ENCODE measurements at regions of chr9 and their contacts with region 1.

Region 1: DNA sequence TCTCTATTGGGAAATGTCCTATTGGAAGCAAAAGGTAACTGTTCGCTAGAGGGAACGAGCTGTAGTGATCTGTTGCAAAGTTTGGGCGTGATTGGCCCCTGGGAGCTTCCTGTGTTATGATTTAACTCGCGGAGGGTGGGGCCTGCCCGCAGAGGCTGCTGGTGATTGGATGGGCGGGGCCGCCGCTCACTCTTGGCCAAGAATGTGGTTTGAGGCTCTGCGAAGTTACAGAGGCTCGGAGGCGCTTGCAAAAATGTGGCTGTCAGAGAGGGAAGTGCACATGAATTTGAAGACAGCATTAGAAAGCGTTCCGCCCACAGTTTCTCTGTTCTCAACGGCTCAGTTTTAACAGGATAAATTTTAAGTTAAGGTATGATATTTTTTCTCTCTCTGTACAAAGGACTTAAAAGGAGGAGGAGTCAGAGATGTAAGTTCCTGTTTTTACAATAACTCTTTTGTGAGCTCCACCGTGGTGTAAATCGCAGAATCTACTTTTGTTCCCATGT is 46.9 kb downstream of the CNTRL start:
- DNase-seq: peak; percentile 98
- H3K4me3 Mint-ChIP-seq: peak overlapping the region; percentile 89
- H3K27ac Mint-ChIP-seq: peak overlapping the region; percentile 80
- H3K4me1 Mint-ChIP-seq: peaks cover 16% of the 10 kb centered on the region
- H3K27me3 Mint-ChIP-seq: no peaks in the 10 kb centered on the region
- CTCF ChIP-seq: no peak

Region 2: GRCh38 chr9:121048618-121049017 is 73.0 kb before region 1 on chr9:
- CTCF ChIA-PET with region 1: no interaction called
- POLR2A ChIA-PET with region 1: no interaction called
- intact Hi-C with region 1: no loop called
- DNase-seq: no peak
- H3K4me3 Mint-ChIP-seq: no peak overlapping the region
- H3K27ac Mint-ChIP-seq: no peak overlapping the region
- H3K4me1 Mint-ChIP-seq: no peaks in the 10 kb centered on the region
- H3K27me3 Mint-ChIP-seq: no peaks in the 10 kb centered on the region
- CTCF ChIP-seq: no peak

Region 3: DNA sequence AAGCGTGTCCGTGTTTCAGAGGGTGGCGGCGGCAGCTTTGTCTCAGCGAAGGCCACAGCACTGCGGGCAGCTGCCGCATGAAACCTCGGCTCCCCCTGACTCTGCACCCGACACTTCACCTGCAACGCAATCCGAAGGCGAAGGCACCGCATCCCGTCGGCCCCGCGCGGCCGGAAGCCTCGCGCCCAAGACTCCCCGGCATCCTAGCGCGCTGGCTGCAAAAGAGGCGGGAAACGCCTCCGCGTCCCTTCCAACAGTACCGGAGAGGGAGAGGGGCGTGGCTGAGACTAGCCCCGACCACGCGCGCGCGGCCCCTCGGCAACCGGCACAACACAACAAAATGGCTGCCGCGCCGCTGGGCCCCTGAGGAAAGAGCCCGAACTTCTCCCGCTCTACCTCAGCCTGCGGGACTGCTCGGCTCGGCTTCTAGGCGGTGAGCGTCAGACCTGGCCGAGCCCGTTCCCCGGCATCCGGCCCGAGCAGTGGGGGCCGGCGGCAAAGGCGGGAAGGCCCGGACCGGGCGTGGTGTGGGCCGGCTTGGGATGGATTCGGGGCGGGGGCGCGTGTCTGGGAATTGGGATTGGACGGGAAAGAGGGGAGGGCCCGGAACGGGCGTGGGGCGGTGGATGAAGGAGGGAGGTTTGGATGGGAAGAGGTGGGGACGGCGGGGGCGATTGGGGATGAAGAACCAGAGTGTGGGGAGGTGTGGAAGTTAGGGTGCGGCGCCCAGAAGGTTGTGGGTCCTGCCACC is 46.8 kb before region 1 on chr9 and contains the start of gene CNTRL:
- CTCF ChIA-PET with region 1: interaction called, 7 read pairs
- POLR2A ChIA-PET with region 1: interaction called, 26 read pairs
- intact Hi-C with region 1: loop called (anchors 2 kb)
- DNase-seq: peak; percentile 92
- H3K4me3 Mint-ChIP-seq: peak within 1 kb of the TSS; percentile 92
- H3K27ac Mint-ChIP-seq: peak within 1 kb of the TSS; percentile 91
- H3K4me1 Mint-ChIP-seq: peaks cover 22% of the 10 kb centered on the region
- H3K27me3 Mint-ChIP-seq: no peaks in the 10 kb centered on the region
- CTCF ChIP-seq: no peak
- total RNA-seq, gene CNTRL: 11.6 and 18.9 TPM in 2 replicates

Region 4: DNA sequence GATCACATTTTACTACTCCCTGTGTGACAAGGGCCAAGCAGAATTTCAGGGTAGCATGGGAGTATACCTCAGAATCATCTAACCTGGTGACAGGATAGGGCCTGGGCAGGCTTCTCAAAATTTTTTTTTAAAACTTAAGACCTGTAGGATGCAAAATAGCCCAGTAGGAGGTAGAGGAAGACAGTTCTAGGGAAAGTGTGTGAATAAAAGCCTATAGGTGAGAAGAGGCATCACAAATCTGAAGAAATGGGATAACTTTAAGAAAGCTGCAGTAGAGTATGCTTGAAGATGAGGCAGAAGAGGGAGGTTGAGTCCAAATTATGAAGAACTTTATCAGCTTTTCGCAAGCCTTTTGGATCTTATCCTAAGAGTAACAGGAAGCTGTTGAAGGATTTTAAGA is 14.6 kb before region 1 on chr9:
- CTCF ChIA-PET with region 1: interaction called, 4 read pairs
- POLR2A ChIA-PET with region 1: interaction called, 17 read pairs
- intact Hi-C with region 1: no loop called
- DNase-seq: peak; percentile 21
- H3K4me3 Mint-ChIP-seq: no peak overlapping the region
- H3K27ac Mint-ChIP-seq: no peak overlapping the region
- H3K4me1 Mint-ChIP-seq: no peaks in the 10 kb centered on the region
- H3K27me3 Mint-ChIP-seq: no peaks in the 10 kb centered on the region
- CTCF ChIP-seq: peak; percentile 32

Region 5: GRCh38 chr9:121133149-121133816 is 11.6 kb after region 1 on chr9:
- CTCF ChIA-PET with region 1: interaction called, 3 read pairs
- POLR2A ChIA-PET with region 1: interaction called, 36 read pairs
- intact Hi-C with region 1: no loop called
- DNase-seq: peak; percentile 24
- H3K4me3 Mint-ChIP-seq: no peak overlapping the region
- H3K27ac Mint-ChIP-seq: no peak overlapping the region
- H3K4me1 Mint-ChIP-seq: no peaks in the 10 kb centered on the region
- H3K27me3 Mint-ChIP-seq: no peaks in the 10 kb centered on the region
- CTCF ChIP-seq: no peak

Region 6: GRCh38 chr9:121138973-121139372 is 17.3 kb after region 1 on chr9:
- CTCF ChIA-PET with region 1: no interaction called
- POLR2A ChIA-PET with region 1: interaction called, 36 read pairs
- intact Hi-C with region 1: no loop called
- DNase-seq: no peak
- H3K4me3 Mint-ChIP-seq: no peak overlapping the region
- H3K27ac Mint-ChIP-seq: no peak overlapping the region
- H3K4me1 Mint-ChIP-seq: no peaks in the 10 kb centered on the region
- H3K27me3 Mint-ChIP-seq: no peaks in the 10 kb centered on the region
- CTCF ChIP-seq: no peak

Region 7: GRCh38 chr9:121156263-121156731 is 34.7 kb after region 1 on chr9:
- CTCF ChIA-PET with region 1: interaction called, 9 read pairs
- POLR2A ChIA-PET with region 1: interaction called, 45 read pairs
- intact Hi-C with region 1: loop called (anchors 5 kb)
- DNase-seq: peak; percentile 87
- H3K4me3 Mint-ChIP-seq: peak overlapping the region; percentile 56
- H3K27ac Mint-ChIP-seq: peak overlapping the region; percentile 69
- H3K4me1 Mint-ChIP-seq: peaks cover 20% of the 10 kb centered on the region
- H3K27me3 Mint-ChIP-seq: no peaks in the 10 kb centered on the region
- CTCF ChIP-seq: no peak